A549 (cell line): ENCODE measurements at regions of chr7 and their contacts with region 1.

Region 1: GRCh38 chr7:4641667-4642467 is 40.2 kb upstream of the FOXK1 start:
- DNase-seq: peak; percentile 73 to 96
- ATAC-seq: peak; percentile 95 to 96
- H3K4me3 ChIP-seq: peak overlapping the region; percentile 57
- H3K27ac ChIP-seq: peak overlapping the region; percentile 89 to 98
- H3K4me1 ChIP-seq: peaks cover 9% of the 10 kb centered on the region; the same call in 1 of the 3 replicates
- CTCF ChIP-seq: peak; percentile 65
- EP300 ChIP-seq: peak in 1 of 2 experiments; percentile 29; a peak in 1 of 5 replicates
- POLR2A ChIP-seq: peak; percentile 96
- RAD21 ChIP-seq: peak in 1 of 2 experiments; percentile 46; a peak in 2 of 5 replicates

Region 2: GRCh38 chr7:4631664-4632171 is 10.1 kb before region 1 on chr7:
- CTCF ChIA-PET with region 1: interaction called, 26 read pairs
- POLR2A ChIA-PET with region 1: interaction called, 29 read pairs
- DNase-seq: peak; percentile 96 to 98
- ATAC-seq: peak; percentile 97 to 98
- H3K4me3 ChIP-seq: peak overlapping the region; percentile 24
- H3K27ac ChIP-seq: peak overlapping the region; percentile 84 to 87
- H3K4me1 ChIP-seq: peaks cover 27% of the 10 kb centered on the region
- CTCF ChIP-seq: peak; percentile 86
- EP300 ChIP-seq: peak in 1 of 2 experiments; percentile 58; a peak in 1 of 5 replicates
- POLR2A ChIP-seq: 0 out of 2 replicates have a peak, but pooled peaks have one; percentile 16
- RAD21 ChIP-seq: peak; percentile 96

Region 3: DNA sequence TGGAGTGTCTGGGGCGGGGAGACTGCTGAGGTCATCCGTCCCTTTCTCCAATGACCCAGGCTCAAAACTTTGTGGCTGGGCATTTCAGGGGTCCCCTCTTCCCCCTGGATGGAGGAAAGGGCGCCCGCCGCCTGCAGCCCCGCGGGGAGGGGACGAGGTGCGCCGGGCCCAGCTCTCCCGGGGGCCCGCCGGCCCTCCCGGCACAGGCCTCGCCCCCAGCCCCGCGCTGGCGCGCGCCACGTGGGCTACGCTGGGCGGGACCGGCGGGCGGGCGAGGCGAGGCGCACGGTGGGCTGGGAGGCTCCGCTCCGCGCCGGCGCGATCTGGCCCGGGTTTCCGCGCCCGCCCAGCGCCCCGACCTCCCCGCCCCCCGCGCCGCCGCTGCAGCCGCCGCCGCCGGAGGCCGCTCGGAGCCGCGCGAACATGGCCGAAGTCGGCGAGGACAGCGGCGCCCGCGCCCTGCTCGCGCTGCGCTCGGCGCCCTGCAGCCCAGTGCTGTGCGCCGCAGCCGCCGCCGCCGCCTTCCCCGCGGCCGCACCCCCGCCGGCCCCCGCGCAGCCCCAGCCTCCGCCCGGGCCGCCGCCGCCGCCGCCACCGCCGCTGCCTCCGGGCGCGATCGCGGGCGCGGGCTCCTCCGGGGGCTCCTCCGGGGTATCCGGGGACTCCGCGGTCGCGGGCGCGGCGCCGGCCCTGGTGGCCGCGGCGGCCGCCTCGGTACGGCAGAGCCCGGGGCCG is 40.2 kb after region 1 on chr7 and contains the start of gene FOXK1:
- CTCF ChIA-PET with region 1: interaction called, 9 read pairs
- POLR2A ChIA-PET with region 1: interaction called, 48 read pairs
- DNase-seq: peak; percentile 46 to 72
- ATAC-seq: peak; percentile 64 to 78
- H3K4me3 ChIP-seq: peak within 1 kb of the TSS; percentile 74
- H3K27ac ChIP-seq: peak within 1 kb of the TSS; percentile 90 to 99
- H3K4me1 ChIP-seq: peaks cover 11% of the 10 kb centered on the region
- CTCF ChIP-seq: no peak
- EP300 ChIP-seq: no peak
- POLR2A ChIP-seq: peak; percentile 31; the same call in 1 of the 2 replicates
- RAD21 ChIP-seq: no peak
- polyA plus RNA-seq, gene FOXK1: 6.8 and 8.3 TPM in 2 replicates

Region 4: GRCh38 chr7:4725014-4725849 is 83.4 kb after region 1 on chr7:
- CTCF ChIA-PET with region 1: interaction called, 7 read pairs
- POLR2A ChIA-PET with region 1: interaction called, 15 read pairs
- DNase-seq: peak; percentile 71 to 72
- ATAC-seq: peak; percentile 81 to 83
- H3K4me3 ChIP-seq: peak overlapping the region; percentile 43
- H3K27ac ChIP-seq: peak overlapping the region; percentile 80 to 96
- H3K4me1 ChIP-seq: peaks cover 19% of the 10 kb centered on the region
- CTCF ChIP-seq: peak; percentile 10; the same call in 1 of the 3 replicates
- EP300 ChIP-seq: no peak
- POLR2A ChIP-seq: no peak; the same call in 1 of the 2 replicates
- RAD21 ChIP-seq: no peak; a peak in 1 of 5 replicates

Region 5: DNA sequence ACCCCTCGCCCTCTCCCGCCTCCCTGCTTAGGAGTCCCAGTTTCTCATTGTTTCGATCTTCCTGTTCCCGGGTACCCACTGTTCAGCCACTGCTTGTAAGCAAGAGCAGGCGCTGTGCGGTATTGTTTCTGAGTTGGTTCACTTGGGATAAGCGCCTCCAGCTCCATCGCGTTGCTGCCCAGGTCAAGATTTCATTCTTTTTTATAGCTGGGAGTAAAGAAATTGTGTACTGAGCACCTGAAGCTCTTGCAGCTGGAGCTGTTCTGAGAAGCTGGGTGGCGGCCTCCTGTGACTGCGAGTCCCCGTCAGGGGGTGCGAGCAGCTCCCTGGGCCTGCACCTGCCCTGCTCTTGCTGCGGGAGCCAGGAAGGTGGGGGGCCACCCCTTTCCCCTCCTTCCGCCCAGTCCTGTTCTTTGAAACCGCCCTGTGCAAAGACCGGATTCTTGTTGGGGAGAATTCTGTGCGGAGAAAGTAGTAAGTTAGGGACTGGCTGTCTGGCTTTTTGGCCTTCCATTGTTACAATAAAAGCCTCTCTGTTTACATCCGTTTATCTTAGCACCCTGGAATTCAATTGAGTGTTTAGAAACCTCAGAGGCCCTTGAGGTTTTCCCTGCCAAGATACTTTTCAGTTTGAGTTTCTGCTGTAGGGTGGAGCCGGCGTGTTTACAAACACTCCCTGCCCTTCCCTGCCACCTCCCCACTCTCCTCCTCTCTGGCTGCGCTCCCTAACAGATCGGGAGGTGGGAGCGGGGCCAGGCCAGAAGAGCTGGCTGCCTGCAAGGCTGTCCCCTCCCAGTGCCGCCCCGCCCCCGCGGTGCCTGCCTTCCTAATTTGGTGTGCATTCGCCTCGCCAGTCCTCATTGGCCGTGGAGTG is 102.8 kb after region 1 on chr7:
- CTCF ChIA-PET with region 1: interaction called, 8 read pairs
- POLR2A ChIA-PET with region 1: interaction called, 32 read pairs
- DNase-seq: peak; percentile 96 to 99
- ATAC-seq: peak; percentile 93 to 95
- H3K4me3 ChIP-seq: 0 out of 3 replicates have a peak overlapping the region, but pooled peaks have one; percentile 4
- H3K27ac ChIP-seq: peak overlapping the region; percentile 96 to 99
- H3K4me1 ChIP-seq: peaks cover 84% of the 10 kb centered on the region
- CTCF ChIP-seq: no peak
- EP300 ChIP-seq: peak; percentile 15 to 62; a peak in 3 of 5 replicates
- POLR2A ChIP-seq: no peak
- RAD21 ChIP-seq: no peak

Region 6: DNA sequence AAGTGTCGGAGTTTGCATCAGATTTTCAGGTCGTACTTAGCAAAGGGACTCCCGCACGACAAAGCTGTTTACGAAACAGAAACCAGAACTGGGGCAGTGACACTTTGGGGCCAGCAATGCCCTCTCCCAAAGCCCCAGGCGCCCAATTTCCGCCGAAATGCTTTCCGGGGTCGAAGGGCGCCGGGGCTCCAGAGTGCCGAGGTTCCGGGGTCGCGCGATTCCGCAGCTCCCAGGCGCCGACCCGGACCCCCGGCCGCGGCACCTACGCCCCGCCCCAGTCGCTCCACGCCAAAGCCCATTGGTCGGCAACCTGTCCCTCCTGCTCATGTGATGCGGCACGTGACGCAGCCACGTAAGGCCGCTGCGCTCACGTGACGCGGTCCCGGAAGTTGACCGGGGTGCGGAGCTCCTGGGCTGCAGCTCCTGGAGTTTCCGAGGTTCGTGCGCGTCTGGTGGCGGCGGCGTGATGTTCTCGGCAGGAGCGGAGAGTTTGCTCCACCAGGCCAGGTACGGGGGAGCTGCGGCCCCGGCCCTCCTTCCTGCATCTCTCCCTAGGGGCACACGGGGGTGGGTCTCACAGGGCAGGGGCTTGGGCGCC is 133.5 kb after region 1 on chr7 and contains the start of gene AP5Z1:
- CTCF ChIA-PET with region 1: interaction called, 4 read pairs
- POLR2A ChIA-PET with region 1: interaction called, 14 read pairs
- DNase-seq: peak; percentile 96 to 99
- ATAC-seq: peak; percentile 92 to 95
- H3K4me3 ChIP-seq: peak within 1 kb of the TSS; percentile 77
- H3K27ac ChIP-seq: peak within 1 kb of the TSS; percentile 87 to 92
- H3K4me1 ChIP-seq: peaks cover 18% of the 10 kb centered on the region; the same call in 1 of the 3 replicates
- CTCF ChIP-seq: no peak
- EP300 ChIP-seq: no peak
- POLR2A ChIP-seq: peak; percentile 78
- RAD21 ChIP-seq: no peak
- polyA plus RNA-seq, gene AP5Z1: 6.8 and 7.1 TPM in 2 replicates

Region 7: GRCh38 chr7:4996696-4997222 is 354.9 kb after region 1 on chr7:
- CTCF ChIA-PET with region 1: no interaction called
- POLR2A ChIA-PET with region 1: no interaction called
- DNase-seq: no peak
- ATAC-seq: no peak; a peak in 1 of 6 replicates
- H3K4me3 ChIP-seq: no peak overlapping the region
- H3K27ac ChIP-seq: no peak overlapping the region
- H3K4me1 ChIP-seq: no peaks in the 10 kb centered on the region
- CTCF ChIP-seq: no peak
- EP300 ChIP-seq: no peak
- POLR2A ChIP-seq: no peak
- RAD21 ChIP-seq: no peak